PC-9 (cell line): ENCODE measurements at regions of chrX and their contacts with region 1.

Region 1: GRCh38 chrX:154370882-154371770 is 3.3 kb downstream of the FLNA start:
- DNase-seq: peak; percentile 75 to 98
- H3K4me3 ChIP-seq: peak overlapping the region; percentile 60; the same call in 1 of the 2 replicates
- H3K27ac ChIP-seq: no peak overlapping the region
- H3K4me1 ChIP-seq: no peaks in the 10 kb centered on the region; the same call in 1 of the 2 replicates
- H3K27me3 ChIP-seq: no peaks in the 10 kb centered on the region
- CTCF ChIP-seq: no peak

Region 2: GRCh38 chrX:153941336-153942252 is 429.5 kb before region 1 on chrX:
- CTCF ChIA-PET with region 1: interaction called, 15 read pairs
- POLR2A ChIA-PET with region 1: interaction called, 11 read pairs
- intact Hi-C with region 1: no loop called
- DNase-seq: peak in 1 of 2 experiments; percentile 38
- H3K4me3 ChIP-seq: no peak overlapping the region
- H3K27ac ChIP-seq: no peak overlapping the region
- H3K4me1 ChIP-seq: no peaks in the 10 kb centered on the region
- H3K27me3 ChIP-seq: no peaks in the 10 kb centered on the region
- CTCF ChIP-seq: no peak

Region 3: GRCh38 chrX:153981771-153982533 is 389.2 kb before region 1 on chrX:
- CTCF ChIA-PET with region 1: no interaction called
- POLR2A ChIA-PET with region 1: no interaction called
- intact Hi-C with region 1: no loop called
- DNase-seq: no peak
- H3K4me3 ChIP-seq: no peak overlapping the region
- H3K27ac ChIP-seq: no peak overlapping the region
- H3K4me1 ChIP-seq: no peaks in the 10 kb centered on the region
- H3K27me3 ChIP-seq: no peaks in the 10 kb centered on the region
- CTCF ChIP-seq: no peak

Region 4: GRCh38 chrX:154397819-154398724 is 26.9 kb after region 1 on chrX and contains the start of gene RPL10:
- CTCF ChIA-PET with region 1: interaction called, 14 read pairs
- POLR2A ChIA-PET with region 1: interaction called, 11 read pairs
- intact Hi-C with region 1: no loop called
- DNase-seq: peak; percentile 92 to 98
- H3K4me3 ChIP-seq: peak within 1 kb of the TSS; percentile 93
- H3K27ac ChIP-seq: peak within 1 kb of the TSS; percentile 97
- H3K4me1 ChIP-seq: peaks cover 12% of the 10 kb centered on the region
- H3K27me3 ChIP-seq: no peaks in the 10 kb centered on the region
- CTCF ChIP-seq: no peak
- total RNA-seq, gene RPL10: 3,447 and 3,685 TPM in 2 replicates

Region 5: DNA sequence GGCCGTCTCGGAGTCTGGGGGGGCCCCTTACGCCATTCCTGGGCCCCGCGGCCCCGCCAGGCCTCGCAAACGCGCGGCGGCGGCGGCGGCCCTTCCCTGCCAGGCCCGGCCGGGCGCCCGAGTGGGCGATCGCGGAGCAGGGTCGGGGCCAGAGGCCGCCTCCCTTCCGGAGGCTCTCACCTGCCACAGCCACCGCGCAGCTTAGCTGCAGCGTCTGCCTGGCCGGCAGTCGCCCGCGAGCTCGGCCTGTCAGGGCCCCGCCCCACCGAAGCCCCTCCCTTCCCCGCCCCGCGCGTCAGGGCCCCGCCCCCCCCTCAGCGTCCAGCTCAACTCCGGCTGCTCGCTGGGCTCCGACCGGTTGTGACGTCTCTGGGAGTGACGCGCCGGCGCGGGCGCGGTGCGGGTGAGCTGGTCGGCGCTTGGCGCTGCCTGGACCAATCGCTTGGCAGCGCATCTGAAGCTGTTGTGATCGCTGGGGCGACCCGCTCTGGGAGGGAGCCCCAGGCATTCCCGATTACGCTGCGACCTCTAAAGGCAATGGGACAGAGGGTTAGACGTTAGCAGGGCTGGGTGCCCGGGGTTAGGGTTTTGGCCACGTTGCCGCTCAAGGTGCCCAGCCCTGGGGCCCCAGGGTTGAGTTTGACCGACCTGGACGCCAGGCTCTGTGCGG is 119.4 kb after region 1 on chrX and contains the start of gene SLC10A3:
- CTCF ChIA-PET with region 1: interaction called, 8 read pairs
- POLR2A ChIA-PET with region 1: interaction called, 14 read pairs
- intact Hi-C with region 1: loop called (anchors 2 kb)
- DNase-seq: peak; percentile 87 to 97
- H3K4me3 ChIP-seq: peak within 1 kb of the TSS; percentile 66
- H3K27ac ChIP-seq: peak within 1 kb of the TSS; percentile 68
- H3K4me1 ChIP-seq: peaks cover 14% of the 10 kb centered on the region; the same call in 1 of the 2 replicates
- H3K27me3 ChIP-seq: no peaks in the 10 kb centered on the region
- CTCF ChIP-seq: no peak
- total RNA-seq, gene SLC10A3: 38.3 and 54.9 TPM in 2 replicates

Region 6: GRCh38 chrX:154541724-154542467 is 170.8 kb after region 1 on chrX:
- CTCF ChIA-PET with region 1: interaction called, 12 read pairs
- POLR2A ChIA-PET with region 1: interaction called, 12 read pairs
- intact Hi-C with region 1: no loop called
- DNase-seq: peak; percentile 93 to 97
- H3K4me3 ChIP-seq: peak overlapping the region; percentile 99
- H3K27ac ChIP-seq: peak overlapping the region; percentile 100
- H3K4me1 ChIP-seq: peaks cover 58% of the 10 kb centered on the region
- H3K27me3 ChIP-seq: no peaks in the 10 kb centered on the region
- CTCF ChIP-seq: no peak